ENCODE measurements at regions of chr3 and their contacts with region 1.

Region 1: DNA sequence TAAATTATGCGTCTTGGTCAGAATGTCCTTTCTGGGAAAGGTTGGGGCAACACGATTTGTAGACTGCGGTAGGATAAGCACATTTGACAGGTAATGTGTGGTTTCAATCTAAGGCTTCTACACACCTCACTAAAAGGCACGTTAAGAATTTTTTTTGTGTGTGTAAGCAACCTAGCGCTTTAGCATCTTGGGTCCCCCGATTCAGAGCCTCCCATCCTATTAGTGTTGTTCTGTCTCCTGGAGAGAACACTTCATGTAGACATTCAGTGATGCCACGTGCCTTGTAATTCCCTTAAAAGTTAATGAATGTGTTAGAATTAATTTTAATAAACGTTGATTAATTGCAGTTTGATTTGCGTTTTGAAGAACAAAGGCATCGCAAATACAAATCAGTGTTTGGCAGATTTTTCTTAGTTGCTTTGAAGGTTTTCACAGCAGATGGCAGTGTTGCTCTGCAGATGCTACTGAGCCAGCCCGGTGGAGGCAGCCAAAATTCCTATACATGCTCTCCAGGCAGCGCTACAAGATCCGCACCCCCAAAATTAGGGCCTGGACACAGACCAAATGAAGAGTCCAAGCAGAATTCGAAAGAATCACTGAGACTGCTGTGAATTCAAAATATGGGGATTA is 63.5 kb downstream of the OTOL1 start:
- DNase-seq: no peak
- H3K4me3 ChIP-seq: no peak overlapping the region
- H3K27ac ChIP-seq: no peak overlapping the region
- H3K4me1 ChIP-seq: no peaks in the 10 kb centered on the region
- H3K27me3 ChIP-seq: no peaks in the 10 kb centered on the region
- CTCF ChIP-seq: peak in 1 of 2 donors; percentile 5
- POLR2A ChIP-seq: no peak

Region 2: GRCh38 chr3:161540594-161540993 is 19.5 kb before region 1 on chr3:
- CTCF ChIA-PET with region 1: no interaction called
- POLR2A ChIA-PET with region 1: no interaction called
- dilution Hi-C with region 1: no loop called
- intact Hi-C with region 1: no loop called
- DNase-seq: no peak
- H3K4me3 ChIP-seq: no peak overlapping the region
- H3K27ac ChIP-seq: no peak overlapping the region
- H3K4me1 ChIP-seq: no peaks in the 10 kb centered on the region
- H3K27me3 ChIP-seq: no peaks in the 10 kb centered on the region
- CTCF ChIP-seq: no peak
- POLR2A ChIP-seq: no peak

Region 3: DNA sequence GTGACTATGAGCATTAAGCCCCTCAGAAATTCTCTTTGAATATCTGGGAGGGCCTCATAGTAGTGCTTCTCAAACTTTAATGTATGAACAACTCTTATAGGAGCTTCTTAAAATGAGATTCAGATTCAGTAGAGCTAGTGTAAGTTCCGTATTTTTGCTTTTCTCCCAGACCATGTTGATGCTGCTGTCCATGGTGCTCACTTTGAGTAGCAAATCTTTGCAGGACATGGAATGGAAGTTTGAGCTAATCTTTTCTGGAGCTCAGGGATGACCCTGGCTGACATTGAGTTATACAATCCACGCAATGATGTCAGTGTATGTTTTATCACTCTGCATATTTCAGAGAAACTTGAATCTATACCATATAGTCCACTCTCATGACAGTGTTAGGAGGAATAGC is 70.7 kb after region 1 on chr3:
- CTCF ChIA-PET with region 1: no interaction called
- POLR2A ChIA-PET with region 1: no interaction called
- dilution Hi-C with region 1: no loop called
- intact Hi-C with region 1: no loop called
- DNase-seq: no peak
- H3K4me3 ChIP-seq: no peak overlapping the region
- H3K27ac ChIP-seq: no peak overlapping the region
- H3K4me1 ChIP-seq: no peaks in the 10 kb centered on the region
- H3K27me3 ChIP-seq: no peaks in the 10 kb centered on the region
- CTCF ChIP-seq: no peak
- POLR2A ChIP-seq: no peak

Region 4: GRCh38 chr3:163056874-163057497 is 1496.9 kb after region 1 on chr3:
- CTCF ChIA-PET with region 1: no interaction called
- POLR2A ChIA-PET with region 1: no interaction called
- dilution Hi-C with region 1: no loop called
- intact Hi-C with region 1: loop called (anchors 10 kb)
- DNase-seq: no peak
- H3K4me3 ChIP-seq: no peak overlapping the region
- H3K27ac ChIP-seq: no peak overlapping the region
- H3K4me1 ChIP-seq: no peaks in the 10 kb centered on the region
- H3K27me3 ChIP-seq: no peaks in the 10 kb centered on the region
- CTCF ChIP-seq: peak; percentile 24 to 29
- POLR2A ChIP-seq: no peak

Measured in endothelial cell of umbilical vein (primary cell).